Left ventricle myocardium superior (tissue), 1 donor: ENCODE measurements at regions of chr1 and their contacts with region 1.

Region 1: GRCh38 chr1:70509996-70510876 is 99.2 kb downstream of the CTH start:
- DNase-seq: no peak
- ATAC-seq: peak; percentile 70

Region 2: DNA sequence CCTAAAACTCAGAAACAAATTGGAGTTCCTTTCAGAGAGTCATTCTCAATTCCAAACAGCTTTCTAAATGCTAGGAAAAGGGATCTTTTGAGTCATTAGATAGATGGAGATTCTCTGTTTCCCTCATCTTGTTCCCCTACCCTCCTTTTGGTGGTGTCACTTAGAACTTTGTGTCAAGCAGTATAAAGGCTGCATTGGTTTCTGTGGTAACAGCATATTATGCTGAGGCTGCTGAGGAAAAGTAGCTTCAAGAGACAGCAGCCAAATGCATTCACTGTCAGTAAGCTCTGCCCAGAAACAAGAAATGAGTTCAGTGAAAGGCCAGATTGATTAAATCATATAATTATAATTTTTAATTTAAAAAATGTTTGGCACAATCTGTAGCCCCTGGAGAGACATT is 449.0 kb before region 1 on chr1:
- intact Hi-C with region 1: no loop called
- DNase-seq: no peak
- ATAC-seq: no peak

Region 3: DNA sequence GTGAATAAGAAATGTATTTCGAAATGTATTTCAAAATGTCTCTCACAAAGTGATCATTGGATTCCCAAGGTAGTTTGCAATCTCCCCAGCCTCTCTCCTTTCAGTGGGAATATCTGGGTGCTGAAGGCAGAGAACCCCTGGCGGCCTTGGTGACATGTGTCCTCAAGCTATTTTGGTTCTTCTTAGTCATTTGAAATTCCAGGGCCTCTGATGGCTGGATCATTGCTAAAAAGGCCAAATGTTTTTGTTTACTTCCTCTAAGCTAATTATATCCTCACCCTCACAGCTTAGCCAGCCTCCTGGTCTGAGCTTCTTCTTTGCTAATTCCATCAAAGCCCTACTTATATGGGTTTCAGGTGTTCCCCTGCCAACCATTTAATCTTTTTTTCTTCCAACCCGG is 376.1 kb before region 1 on chr1:
- intact Hi-C with region 1: loop called (anchors 2 kb)
- DNase-seq: no peak
- ATAC-seq: peak; percentile 82

Region 4: GRCh38 chr1:70675737-70676156 is 165.5 kb after region 1 on chr1:
- intact Hi-C with region 1: no loop called
- DNase-seq: no peak
- ATAC-seq: no peak